ENCODE measurements at regions of chr16 and their contacts with region 1.

Region 1: GRCh38 chr16:4425378-4426020 is at the start of gene DNAJA3:
- DNase-seq: peak; percentile 80 to 97 (median 92)
- ATAC-seq: peak; percentile 84
- H3K4me3 ChIP-seq: peak within 1 kb of the TSS; percentile 83 to 100
- H3K4me3 Mint-ChIP-seq: peak within 1 kb of the TSS; percentile 96
- H3K27ac ChIP-seq: peak within 1 kb of the TSS; percentile 96 to 100
- H3K27ac Mint-ChIP-seq: peak within 1 kb of the TSS; percentile 99
- H3K4me1 ChIP-seq: peaks cover 23% of the 10 kb centered on the region
- H3K4me1 Mint-ChIP-seq: peaks cover 32% of the 10 kb centered on the region
- H3K27me3 ChIP-seq: no peaks in the 10 kb centered on the region
- H3K27me3 Mint-ChIP-seq: no peaks in the 10 kb centered on the region
- CTCF ChIP-seq: no peak
- total RNA-seq, gene DNAJA3: 13.8 to 17.4 TPM

Region 2: GRCh38 chr16:4435337-4436067 is 10.0 kb after region 1 on chr16:
- CTCF ChIA-PET with region 1: no interaction called
- POLR2A ChIA-PET with region 1: no interaction called
- intact Hi-C with region 1: no loop called
- DNase-seq: no peak
- ATAC-seq: no peak
- H3K4me3 ChIP-seq: no peak overlapping the region
- H3K4me3 Mint-ChIP-seq: no peak overlapping the region
- H3K27ac ChIP-seq: no peak overlapping the region
- H3K27ac Mint-ChIP-seq: peak overlapping the region; percentile 41
- H3K4me1 ChIP-seq: no peaks in the 10 kb centered on the region
- H3K4me1 Mint-ChIP-seq: peaks cover 21% of the 10 kb centered on the region
- H3K27me3 ChIP-seq: no peaks in the 10 kb centered on the region
- H3K27me3 Mint-ChIP-seq: no peaks in the 10 kb centered on the region
- CTCF ChIP-seq: no peak

Region 3: GRCh38 chr16:4538350-4539235 is 113.1 kb after region 1 on chr16 and contains the start of gene CDIP1:
- CTCF ChIA-PET with region 1: no interaction called
- POLR2A ChIA-PET with region 1: no interaction called
- intact Hi-C with region 1: loop called (anchors 1 kb)
- DNase-seq: peak; percentile 88 to 98 (median 94)
- ATAC-seq: peak; percentile 86
- H3K4me3 ChIP-seq: peak within 1 kb of the TSS; percentile 71
- H3K4me3 Mint-ChIP-seq: peak within 1 kb of the TSS; percentile 80
- H3K27ac ChIP-seq: peak within 1 kb of the TSS; percentile 86 to 90
- H3K27ac Mint-ChIP-seq: peak within 1 kb of the TSS; percentile 92
- H3K4me1 ChIP-seq: peaks cover 45% of the 10 kb centered on the region
- H3K4me1 Mint-ChIP-seq: peaks cover 39% of the 10 kb centered on the region
- H3K27me3 ChIP-seq: no peaks in the 10 kb centered on the region
- H3K27me3 Mint-ChIP-seq: no peaks in the 10 kb centered on the region
- CTCF ChIP-seq: no peak
- total RNA-seq, gene CDIP1: 21.7 to 25.0 TPM

Region 4: GRCh38 chr16:4766874-4767628 is 341.6 kb after region 1 on chr16 and contains the start of gene ZNF500:
- CTCF ChIA-PET with region 1: no interaction called
- POLR2A ChIA-PET with region 1: no interaction called
- intact Hi-C with region 1: loop called in 1 of 2 experiments (anchors 5 kb)
- DNase-seq: peak; percentile 89 to 98 (median 96)
- ATAC-seq: peak; percentile 90
- H3K4me3 ChIP-seq: peak within 1 kb of the TSS; percentile 77 to 83
- H3K4me3 Mint-ChIP-seq: peak within 1 kb of the TSS; percentile 91
- H3K27ac ChIP-seq: peak within 1 kb of the TSS; percentile 67 to 77
- H3K27ac Mint-ChIP-seq: peak within 1 kb of the TSS; percentile 81
- H3K4me1 ChIP-seq: peaks cover 22% of the 10 kb centered on the region
- H3K4me1 Mint-ChIP-seq: peaks cover 45% of the 10 kb centered on the region
- H3K27me3 ChIP-seq: no peaks in the 10 kb centered on the region
- H3K27me3 Mint-ChIP-seq: no peaks in the 10 kb centered on the region
- CTCF ChIP-seq: no peak
- total RNA-seq, gene ZNF500: 12.1 to 15.9 TPM

Measured in CD8-positive, alpha-beta T cell (primary cell).